IMR-90 (cell line): ENCODE measurements at regions of chr4 and their contacts with region 1.

Region 1: GRCh38 chr4:25144870-25145481 is 15.3 kb downstream of the SEPSECS start:
- DNase-seq: peak; percentile 21
- ATAC-seq: no peak
- H3K4me3 ChIP-seq: no peak overlapping the region
- H3K27ac ChIP-seq: no peak overlapping the region
- H3K4me1 ChIP-seq: no peaks in the 10 kb centered on the region
- H3K27me3 ChIP-seq: no peaks in the 10 kb centered on the region
- CTCF ChIP-seq: peak; percentile 57
- POLR2A ChIP-seq: no peak
- RAD21 ChIP-seq: peak; percentile 54

Region 2: GRCh38 chr4:25129917-25130316 is 15.1 kb before region 1 on chr4:
- CTCF ChIA-PET with region 1: interaction called, 10 read pairs
- POLR2A ChIA-PET with region 1: no interaction called
- dilution Hi-C with region 1: no loop called
- in situ Hi-C with region 1: no loop called
- intact Hi-C with region 1: no loop called
- DNase-seq: peak; percentile 2
- ATAC-seq: no peak; the same call in 1 of the 2 replicates
- H3K4me3 ChIP-seq: no peak overlapping the region
- H3K27ac ChIP-seq: no peak overlapping the region
- H3K4me1 ChIP-seq: no peaks in the 10 kb centered on the region
- H3K27me3 ChIP-seq: no peaks in the 10 kb centered on the region
- CTCF ChIP-seq: no peak
- POLR2A ChIP-seq: no peak
- RAD21 ChIP-seq: no peak

Region 3: GRCh38 chr4:25209702-25210101 is 64.7 kb after region 1 on chr4:
- CTCF ChIA-PET with region 1: no interaction called
- POLR2A ChIA-PET with region 1: no interaction called
- dilution Hi-C with region 1: no loop called
- in situ Hi-C with region 1: no loop called
- intact Hi-C with region 1: no loop called
- DNase-seq: no peak
- ATAC-seq: no peak
- H3K4me3 ChIP-seq: no peak overlapping the region
- H3K27ac ChIP-seq: no peak overlapping the region
- H3K4me1 ChIP-seq: no peaks in the 10 kb centered on the region
- H3K27me3 ChIP-seq: peaks cover 4% of the 10 kb centered on the region
- CTCF ChIP-seq: no peak
- POLR2A ChIP-seq: no peak
- RAD21 ChIP-seq: no peak